Breast epithelium (tissue), 4 donors: ENCODE measurements at regions of chr1 and their contacts with region 1.

Region 1: GRCh38 chr1:246091477-246091876 is 415.6 kb downstream of the SMYD3 start:
- DNase-seq: no peak
- H3K4me3 ChIP-seq: no peak overlapping the region
- H3K27ac ChIP-seq: no peak overlapping the region
- H3K4me1 ChIP-seq: no peaks in the 10 kb centered on the region
- H3K27me3 ChIP-seq: no peaks in the 10 kb centered on the region
- CTCF ChIP-seq: no peak
- POLR2A ChIP-seq: no peak

Region 2: GRCh38 chr1:244536316-244536715 is 1555.2 kb before region 1 on chr1:
- intact Hi-C with region 1: no loop called
- DNase-seq: no peak
- H3K4me3 ChIP-seq: no peak overlapping the region
- H3K27ac ChIP-seq: no peak overlapping the region
- H3K4me1 ChIP-seq: no peaks in the 10 kb centered on the region
- H3K27me3 ChIP-seq: no peaks in the 10 kb centered on the region
- CTCF ChIP-seq: no peak
- POLR2A ChIP-seq: no peak

Region 3: DNA sequence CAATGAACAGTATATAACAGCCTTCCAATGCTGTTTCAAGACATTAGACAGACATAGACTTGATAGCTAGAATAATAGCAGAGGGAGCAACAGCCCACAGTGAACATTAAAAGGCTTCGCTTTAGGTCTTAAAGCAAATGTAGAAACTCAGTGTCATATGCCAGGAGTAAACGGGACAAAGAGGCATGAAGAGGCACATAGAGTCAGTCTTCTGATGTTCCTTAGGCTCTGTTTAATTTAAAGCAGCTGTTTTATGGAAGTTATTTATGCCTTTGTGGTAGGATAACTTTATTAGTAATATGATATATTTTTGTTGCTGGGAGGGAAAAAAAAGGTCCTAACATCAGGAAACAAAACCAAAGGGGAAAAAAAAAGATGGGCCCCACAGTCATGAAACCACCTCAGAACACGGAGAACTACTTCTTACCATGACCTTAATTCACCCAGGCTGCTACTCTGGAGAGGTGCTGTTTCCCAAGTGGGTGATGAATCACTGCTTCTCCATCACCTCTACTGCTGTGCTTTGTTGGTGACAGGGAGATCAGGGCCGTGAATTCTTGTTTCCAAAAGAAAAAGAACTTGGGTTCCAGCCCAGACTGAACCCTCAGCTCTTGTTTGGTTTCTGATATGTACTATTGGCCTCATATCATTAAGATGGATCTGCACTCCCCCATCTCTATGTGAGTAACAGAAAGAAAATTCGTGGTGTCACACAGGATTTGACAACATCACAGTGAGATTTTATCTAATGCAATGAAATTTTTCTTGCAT is 319.8 kb before region 1 on chr1:
- intact Hi-C with region 1: no loop called
- DNase-seq: no peak
- H3K4me3 ChIP-seq: no peak overlapping the region
- H3K27ac ChIP-seq: no peak overlapping the region
- H3K4me1 ChIP-seq: no peaks in the 10 kb centered on the region
- H3K27me3 ChIP-seq: no peaks in the 10 kb centered on the region
- CTCF ChIP-seq: no peak
- POLR2A ChIP-seq: no peak

Region 4: DNA sequence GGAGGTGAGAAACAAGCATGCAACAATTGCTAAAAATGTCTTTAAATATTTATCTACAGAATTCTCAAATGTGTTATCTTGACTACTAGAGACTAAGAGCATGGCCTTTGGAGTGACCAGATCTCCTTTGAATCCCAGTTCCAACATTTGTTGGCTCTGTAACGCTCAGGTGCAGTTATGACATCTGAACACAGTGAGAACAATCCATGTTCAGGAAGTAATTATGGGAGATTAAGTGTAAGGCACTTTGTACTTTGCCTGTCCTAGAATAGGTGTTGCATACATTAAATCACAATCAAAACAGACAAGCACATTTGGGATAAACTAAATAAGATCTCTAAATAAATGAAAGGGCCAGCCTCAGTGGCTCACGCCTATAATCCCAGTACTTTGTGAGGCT is 38.9 kb before region 1 on chr1:
- intact Hi-C with region 1: no loop called
- DNase-seq: no peak
- H3K4me3 ChIP-seq: no peak overlapping the region
- H3K27ac ChIP-seq: no peak overlapping the region
- H3K4me1 ChIP-seq: no peaks in the 10 kb centered on the region
- H3K27me3 ChIP-seq: no peaks in the 10 kb centered on the region
- CTCF ChIP-seq: no peak
- POLR2A ChIP-seq: no peak

Region 5: GRCh38 chr1:246067432-246068216 is 23.9 kb before region 1 on chr1:
- intact Hi-C with region 1: no loop called
- DNase-seq: no peak
- H3K4me3 ChIP-seq: no peak overlapping the region
- H3K27ac ChIP-seq: no peak overlapping the region
- H3K4me1 ChIP-seq: no peaks in the 10 kb centered on the region
- H3K27me3 ChIP-seq: no peaks in the 10 kb centered on the region
- CTCF ChIP-seq: no peak
- POLR2A ChIP-seq: no peak

Region 6: DNA sequence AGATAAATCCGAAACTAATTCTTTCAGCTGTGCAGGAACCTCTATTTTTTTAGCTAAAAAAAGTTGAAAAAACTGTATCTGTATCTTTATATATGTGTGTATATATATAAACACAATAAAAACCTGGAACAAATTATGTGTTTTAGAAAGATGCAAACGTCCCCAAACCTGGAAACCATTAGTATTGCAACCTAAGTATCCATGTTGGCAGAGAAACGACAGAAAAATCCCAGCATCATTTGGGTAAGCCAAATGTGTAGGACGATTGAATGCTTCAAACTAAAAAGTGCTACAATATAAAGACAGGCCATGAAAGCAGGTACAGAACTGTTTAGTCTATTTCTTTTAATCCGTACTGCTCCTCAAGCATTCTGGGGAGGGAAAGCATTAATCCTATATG is 752.4 kb after region 1 on chr1:
- intact Hi-C with region 1: loop called (anchors 5 kb)
- DNase-seq: no peak
- H3K4me3 ChIP-seq: no peak overlapping the region
- H3K27ac ChIP-seq: no peak overlapping the region
- H3K4me1 ChIP-seq: no peaks in the 10 kb centered on the region
- H3K27me3 ChIP-seq: no peaks in the 10 kb centered on the region
- CTCF ChIP-seq: no peak
- POLR2A ChIP-seq: no peak